ENCODE measurements at regions of chr22 and their contacts with region 1.

Region 1: GRCh38 chr22:45376703-45377102 is 36.7 kb downstream of the SMC1B start:
- DNase-seq: no peak
- ATAC-seq: no peak
- H3K4me3 ChIP-seq: no peak overlapping the region
- H3K27ac ChIP-seq: no peak overlapping the region
- H3K4me1 ChIP-seq: no peaks in the 10 kb centered on the region
- H3K27me3 ChIP-seq: no peaks in the 10 kb centered on the region
- CTCF ChIP-seq: no peak
- EP300 ChIP-seq: no peak
- POLR2A ChIP-seq: no peak
- RAD21 ChIP-seq: no peak

Region 2: DNA sequence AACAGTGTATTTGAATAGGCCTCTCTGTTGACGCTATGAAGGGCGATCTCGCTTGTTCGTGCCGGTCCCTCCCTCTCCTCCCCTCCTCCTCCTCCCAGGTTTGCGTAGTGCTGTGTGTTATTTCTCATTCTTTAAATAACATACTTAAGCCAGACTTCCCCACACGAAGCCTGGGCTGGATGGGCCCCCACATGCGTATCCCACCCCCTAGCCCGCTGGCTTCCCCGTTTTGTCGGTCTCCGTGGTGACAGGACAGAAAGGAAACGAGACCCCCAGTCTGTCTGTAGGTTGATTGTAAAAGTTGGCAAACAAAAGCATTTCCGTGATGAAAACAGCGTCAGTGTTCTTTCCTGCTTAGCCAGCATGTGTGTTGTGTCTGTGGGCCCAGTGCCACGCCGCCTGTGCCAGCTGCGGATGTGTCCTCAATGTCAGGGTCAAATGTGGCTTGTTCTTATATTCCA is 39.7 kb before region 1 on chr22:
- CTCF ChIA-PET with region 1: no interaction called
- POLR2A ChIA-PET with region 1: no interaction called
- in situ Hi-C with region 1: no loop called
- intact Hi-C with region 1: no loop called
- DNase-seq: no peak
- ATAC-seq: no peak
- H3K4me3 ChIP-seq: no peak overlapping the region
- H3K27ac ChIP-seq: no peak overlapping the region
- H3K4me1 ChIP-seq: 0 out of 2 replicates have a peak, but pooled peaks cover 6% of the 10 kb centered on the region
- H3K27me3 ChIP-seq: no peaks in the 10 kb centered on the region
- CTCF ChIP-seq: no peak
- EP300 ChIP-seq: no peak
- POLR2A ChIP-seq: no peak
- RAD21 ChIP-seq: no peak

Region 3: DNA sequence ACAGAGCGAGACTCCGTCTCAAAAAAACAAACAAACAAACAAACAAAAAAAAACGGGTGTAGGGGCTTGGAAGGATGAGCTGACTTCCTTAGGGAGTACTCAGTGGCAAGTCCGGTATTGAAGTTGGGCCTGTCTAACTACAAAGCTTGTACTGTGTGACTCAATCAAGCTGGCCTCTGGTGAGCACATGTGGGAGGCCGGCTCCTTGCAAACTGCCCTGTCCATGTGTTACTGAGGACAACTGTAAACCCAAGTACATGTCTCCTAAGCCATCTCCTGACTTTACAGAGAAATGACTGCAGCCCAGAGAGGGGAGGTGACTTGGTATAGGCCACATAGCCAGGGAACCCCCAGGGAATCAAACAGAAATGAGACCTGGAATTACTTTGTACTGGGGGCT is 48.4 kb after region 1 on chr22:
- CTCF ChIA-PET with region 1: no interaction called
- POLR2A ChIA-PET with region 1: no interaction called
- in situ Hi-C with region 1: loop called (anchors 5 kb)
- intact Hi-C with region 1: no loop called
- DNase-seq: no peak
- ATAC-seq: no peak; the same call in 2 of the 3 replicates
- H3K4me3 ChIP-seq: no peak overlapping the region
- H3K27ac ChIP-seq: no peak overlapping the region
- H3K4me1 ChIP-seq: no peaks in the 10 kb centered on the region
- H3K27me3 ChIP-seq: peaks cover 3 to 22% of the 10 kb centered on the region in 2 experiments; a peak in 3 of 5 replicates
- CTCF ChIP-seq: no peak
- EP300 ChIP-seq: no peak
- POLR2A ChIP-seq: no peak
- RAD21 ChIP-seq: no peak

Measured in HepG2 (cell line).